HEK293 (cell line): ENCODE measurements at regions of chr4 and their contacts with region 1.

Region 1: DNA sequence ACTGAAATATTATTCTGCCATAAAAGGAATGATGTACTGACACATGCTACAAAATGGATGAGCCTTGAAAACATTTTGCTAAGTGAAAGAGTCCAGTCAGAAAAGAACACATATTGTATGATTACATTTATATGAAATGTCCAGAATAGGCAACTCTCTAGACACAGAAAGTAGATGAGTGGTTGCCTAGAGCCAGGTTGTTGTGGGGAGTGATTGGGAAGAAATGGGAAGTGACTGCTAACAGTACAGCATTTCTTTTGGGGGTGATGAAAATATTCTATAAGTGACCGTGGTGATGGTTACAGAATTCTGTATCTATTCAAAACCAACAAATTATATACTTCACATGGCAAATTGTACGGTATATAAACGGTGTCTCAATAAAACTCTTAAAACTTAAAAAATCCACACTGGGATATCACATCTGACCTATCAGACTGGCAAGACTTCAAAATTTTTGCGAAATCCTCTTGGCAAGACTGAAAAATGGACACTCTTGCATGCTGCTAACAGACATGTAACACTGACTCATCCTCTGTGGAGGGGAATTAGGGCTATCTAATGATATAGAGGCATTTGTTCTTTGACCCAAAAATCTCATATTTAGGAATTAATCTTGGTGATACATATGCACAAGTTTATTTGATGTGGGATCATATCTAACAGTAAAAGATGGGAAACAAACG is 71.8 kb downstream of the FAM13A start:
- H3K4me3 ChIP-seq: no peak overlapping the region
- H3K27ac ChIP-seq: no peak overlapping the region
- H3K4me1 ChIP-seq: no peaks in the 10 kb centered on the region
- CTCF ChIP-seq: no peak

Region 2: GRCh38 chr4:88962396-88962795 is 22.8 kb before region 1 on chr4:
- CTCF ChIA-PET with region 1: interaction called, 13 read pairs
- POLR2A ChIA-PET with region 1: no interaction called
- H3K4me3 ChIP-seq: no peak overlapping the region
- H3K27ac ChIP-seq: no peak overlapping the region
- H3K4me1 ChIP-seq: no peaks in the 10 kb centered on the region; the same call in 1 of the 2 replicates
- CTCF ChIP-seq: no peak

Region 3: DNA sequence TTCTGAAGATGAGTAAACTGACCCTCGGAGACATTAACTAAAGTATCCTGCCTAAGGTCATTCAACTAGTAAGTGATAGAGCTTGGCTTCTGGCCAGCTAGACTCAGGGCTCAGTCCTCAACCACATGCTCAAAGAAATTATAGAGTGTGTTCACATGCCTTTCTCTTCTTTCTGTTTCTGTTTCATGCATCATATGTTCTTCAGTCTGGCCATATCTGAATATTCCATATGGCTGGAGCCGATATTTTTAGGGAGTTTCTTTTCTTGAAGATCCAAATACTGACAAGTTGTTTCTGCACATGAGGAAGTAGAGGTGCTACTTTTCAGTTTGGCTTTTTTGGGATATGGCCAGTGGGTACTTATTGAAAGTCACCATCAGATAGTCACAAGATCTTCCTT is 954.3 kb after region 1 on chr4:
- CTCF ChIA-PET with region 1: no interaction called
- POLR2A ChIA-PET with region 1: no interaction called
- H3K4me3 ChIP-seq: no peak overlapping the region
- H3K27ac ChIP-seq: no peak overlapping the region
- H3K4me1 ChIP-seq: no peaks in the 10 kb centered on the region
- CTCF ChIP-seq: no peak